ENCODE measurements at regions of chr17 and their contacts with region 1.

Region 1: DNA sequence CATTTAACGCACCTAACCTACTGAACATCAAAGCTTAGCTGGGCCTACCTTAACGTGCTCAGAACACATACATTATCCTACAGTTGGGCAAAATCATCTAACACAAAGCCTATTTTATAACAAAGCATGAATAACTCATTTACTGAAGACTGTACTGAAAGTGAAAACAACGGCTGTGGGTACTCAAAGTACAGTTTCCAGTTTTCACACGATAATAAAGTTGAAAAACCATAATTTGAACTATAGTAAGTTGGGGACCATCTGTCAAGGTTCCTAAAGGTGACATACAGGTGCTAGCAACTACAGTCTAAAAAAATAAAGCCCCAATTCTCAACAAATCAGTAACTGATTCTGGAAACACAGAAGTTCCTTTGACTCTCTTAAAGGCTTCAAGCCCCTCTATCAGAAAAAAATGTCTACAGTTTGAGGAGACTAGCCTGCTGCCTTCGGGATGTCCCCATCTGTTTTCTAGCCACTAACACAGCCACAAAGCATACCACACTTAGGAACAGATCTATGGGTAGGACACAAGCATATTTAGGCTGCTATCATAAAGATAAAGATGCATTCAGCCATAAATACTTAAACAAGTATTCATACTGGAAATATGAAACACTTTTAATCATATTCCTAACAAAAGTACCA is 71.3 kb downstream of the KANSL1 start:
- DNase-seq: no peak
- H3K4me3 ChIP-seq: no peak overlapping the region
- H3K27ac ChIP-seq: no peak overlapping the region
- H3K4me1 ChIP-seq: peaks cover 2% of the 10 kb centered on the region
- H3K27me3 ChIP-seq: no peaks in the 10 kb centered on the region
- CTCF ChIP-seq: no peak

Region 2: DNA sequence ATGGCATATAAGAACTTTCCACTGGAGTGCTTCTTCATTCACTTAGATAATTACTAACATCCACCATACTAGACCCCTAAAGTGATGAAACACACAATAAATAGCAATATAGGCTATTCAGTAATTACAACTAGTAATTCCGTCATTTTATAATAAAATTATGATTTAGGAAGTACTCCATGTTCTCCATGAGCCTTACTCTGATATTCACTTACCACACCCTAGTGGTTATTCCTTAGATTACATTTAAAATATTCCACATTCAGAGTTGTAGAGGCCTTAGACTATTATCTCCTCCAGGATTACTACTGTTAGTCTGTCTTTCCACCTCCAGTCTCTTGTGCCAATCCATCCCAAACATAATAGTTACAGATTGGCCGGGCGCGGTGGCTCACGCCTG is 60.5 kb before region 1 on chr17:
- dilution Hi-C with region 1: no loop called
- DNase-seq: no peak
- H3K4me3 ChIP-seq: no peak overlapping the region
- H3K27ac ChIP-seq: no peak overlapping the region
- H3K4me1 ChIP-seq: peaks cover 24% of the 10 kb centered on the region
- H3K27me3 ChIP-seq: no peaks in the 10 kb centered on the region
- CTCF ChIP-seq: peak in 1 of 3 experiments; percentile 25

Region 3: GRCh38 chr17:46089389-46089965 is 32.5 kb before region 1 on chr17:
- dilution Hi-C with region 1: loop called (anchors 5 kb)
- DNase-seq: no peak
- H3K4me3 ChIP-seq: no peak overlapping the region
- H3K27ac ChIP-seq: no peak overlapping the region
- H3K4me1 ChIP-seq: no peaks in the 10 kb centered on the region
- H3K27me3 ChIP-seq: no peaks in the 10 kb centered on the region
- CTCF ChIP-seq: no peak

Measured in keratinocyte (primary cell).